ENCODE measurements at regions of chr1 and their contacts with region 1.

Region 1: DNA sequence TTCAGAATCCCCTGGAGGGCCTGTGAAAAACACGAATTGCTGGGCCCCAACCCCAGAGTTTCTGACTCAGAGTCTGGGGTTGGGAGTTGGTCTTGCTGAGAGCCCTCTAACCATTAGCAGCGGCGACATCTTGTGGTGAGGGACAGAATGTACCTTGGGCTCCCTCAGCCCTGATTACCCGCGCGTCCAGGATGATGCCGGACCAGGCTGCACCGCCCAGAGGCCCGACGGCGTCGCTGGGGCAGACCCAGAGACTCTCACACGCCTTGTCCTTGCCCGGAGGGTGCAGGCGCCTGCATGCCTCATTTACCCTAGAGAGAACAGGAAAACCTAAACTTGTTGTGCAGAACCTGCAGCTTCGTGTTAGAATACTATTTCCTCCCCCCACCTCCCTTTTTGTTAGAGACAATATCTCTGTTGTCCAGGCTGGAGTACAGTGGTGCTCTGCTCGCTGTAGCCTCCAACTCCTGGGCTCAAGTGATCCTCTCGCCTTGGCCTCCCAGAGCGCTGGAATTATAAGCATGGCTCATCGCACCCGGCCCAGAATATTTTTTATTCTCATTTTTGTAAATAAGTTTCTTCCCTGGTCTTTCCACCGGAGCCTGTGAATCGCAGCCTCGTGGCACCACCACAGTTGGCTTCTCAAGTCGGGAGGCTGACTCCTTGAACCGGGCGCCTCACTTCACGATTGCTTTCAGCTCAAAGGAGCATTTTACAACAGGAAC is 22.2 kb upstream of the RD3 start:
- DNase-seq: peak; percentile 28
- H3K4me3 ChIP-seq: no peak overlapping the region
- CTCF ChIP-seq: peak; percentile 90

Region 2: DNA sequence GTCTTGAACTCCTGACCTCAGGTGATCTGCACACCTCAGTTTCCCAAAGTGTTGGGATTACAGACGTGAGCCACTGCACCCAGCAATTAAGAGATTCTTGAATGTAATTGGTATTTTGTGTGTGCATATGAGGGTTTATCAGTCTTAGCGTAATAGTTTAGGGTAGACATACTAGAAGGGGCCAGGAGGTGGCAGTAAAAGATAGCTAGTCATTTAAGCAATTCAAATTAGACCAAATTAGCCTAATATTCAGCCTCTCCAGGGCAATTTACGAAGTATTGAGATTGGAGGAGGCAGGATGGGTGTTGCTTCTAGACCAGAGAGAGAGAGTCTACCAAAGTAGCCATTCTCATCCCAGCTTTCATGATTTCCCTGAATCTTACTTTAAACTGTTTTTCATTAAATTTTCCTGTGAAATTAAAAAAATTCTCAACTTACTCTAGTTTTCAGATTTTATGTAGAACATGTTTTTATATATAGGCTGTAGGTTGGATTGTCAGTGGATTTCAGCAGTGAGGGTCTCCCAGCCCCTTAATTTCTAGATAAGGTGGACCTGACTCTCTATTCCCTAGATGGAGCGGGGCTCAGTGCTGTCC is 1065.8 kb before region 1 on chr1:
- CTCF ChIA-PET with region 1: interaction called, 16 read pairs
- POLR2A ChIA-PET with region 1: no interaction called
- DNase-seq: peak; percentile 33
- H3K4me3 ChIP-seq: no peak overlapping the region
- CTCF ChIP-seq: peak; percentile 54

Region 3: DNA sequence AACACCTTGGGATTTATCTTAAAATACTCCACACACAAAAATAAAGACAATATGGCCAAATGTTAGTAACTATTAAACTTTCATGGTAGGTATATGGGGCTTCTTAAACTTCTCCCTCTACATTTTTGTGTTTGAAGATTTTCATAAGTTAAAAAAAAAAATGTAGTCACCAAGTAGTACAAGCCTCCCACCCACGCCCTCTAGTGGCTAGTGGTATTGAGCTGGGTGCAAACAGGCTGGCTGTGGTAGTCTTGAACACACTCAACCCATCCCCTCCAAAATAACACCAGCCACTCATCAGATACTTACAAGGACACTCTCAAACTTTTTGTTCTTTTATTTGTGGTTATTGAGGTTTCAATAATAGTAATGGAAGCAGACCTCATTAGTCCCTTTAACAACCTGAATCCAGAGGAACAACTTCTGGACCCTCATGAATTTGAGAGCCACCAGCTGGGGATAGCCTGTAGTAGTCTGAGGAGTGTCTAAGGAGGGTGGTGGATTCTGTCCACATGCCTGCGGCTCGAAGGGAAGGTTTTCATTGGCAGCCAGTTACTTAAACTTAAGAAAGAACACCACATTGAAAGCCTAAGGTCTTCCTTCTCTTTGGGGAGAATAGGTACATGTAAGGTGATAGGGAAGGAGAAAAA is 37.9 kb before region 1 on chr1:
- CTCF ChIA-PET with region 1: interaction called, 60 read pairs
- POLR2A ChIA-PET with region 1: no interaction called
- DNase-seq: peak; percentile 17
- H3K4me3 ChIP-seq: no peak overlapping the region
- CTCF ChIP-seq: peak; percentile 82

Region 4: DNA sequence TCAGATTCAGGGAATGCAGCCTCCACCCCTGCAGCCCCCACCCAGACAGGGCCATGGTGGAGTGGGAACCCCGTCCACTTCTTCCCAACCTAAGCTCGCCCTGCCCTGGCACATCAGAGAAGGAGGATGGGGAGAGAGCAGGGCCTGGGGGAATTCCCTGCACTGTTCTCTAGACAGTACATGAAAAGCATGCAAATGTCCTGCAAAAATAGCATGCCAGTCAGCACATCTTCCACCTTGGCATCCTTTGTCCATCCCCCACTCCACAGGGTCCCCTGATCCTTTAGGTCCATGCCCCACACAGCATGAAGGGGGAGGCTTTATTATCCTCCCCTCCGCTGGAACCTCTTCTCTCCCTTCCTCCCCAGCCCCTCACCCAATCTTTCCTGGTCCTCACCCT is 12.8 kb after region 1 on chr1:
- CTCF ChIA-PET with region 1: interaction called, 45 read pairs
- POLR2A ChIA-PET with region 1: no interaction called
- DNase-seq: no peak
- H3K4me3 ChIP-seq: no peak overlapping the region
- CTCF ChIP-seq: no peak

Region 5: GRCh38 chr1:211643324-211644212 is 129.4 kb after region 1 on chr1:
- CTCF ChIA-PET with region 1: interaction called, 344 read pairs
- POLR2A ChIA-PET with region 1: no interaction called
- DNase-seq: no peak
- H3K4me3 ChIP-seq: no peak overlapping the region
- CTCF ChIP-seq: no peak

Region 6: DNA sequence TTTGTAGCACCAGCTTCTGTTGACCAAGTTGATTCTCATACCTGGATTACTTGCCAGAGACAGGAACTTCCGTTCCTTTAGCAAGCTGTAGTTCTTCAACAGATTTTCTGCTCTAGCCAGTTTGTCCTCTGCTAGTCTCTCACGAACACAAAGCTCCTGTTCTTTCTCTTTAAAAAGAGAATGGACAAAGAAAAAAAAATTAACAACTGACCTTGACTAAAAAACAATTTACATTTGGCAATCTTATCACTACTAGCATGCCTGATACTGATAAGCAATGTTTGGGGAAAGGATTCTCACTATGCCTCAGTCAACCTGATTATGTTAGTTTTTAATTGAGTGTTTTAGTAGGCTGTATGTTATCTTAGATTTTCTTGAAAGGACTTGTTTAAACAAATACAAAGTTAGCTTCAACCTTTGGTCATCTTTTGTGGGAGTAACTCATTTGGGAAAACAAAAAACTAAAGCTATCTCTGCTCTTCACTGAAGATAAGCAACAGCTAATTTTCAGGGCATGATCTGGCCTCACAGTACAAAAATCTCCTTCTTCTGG is 152.9 kb after region 1 on chr1:
- CTCF ChIA-PET with region 1: interaction called, 15 read pairs
- POLR2A ChIA-PET with region 1: no interaction called
- DNase-seq: no peak
- H3K4me3 ChIP-seq: no peak overlapping the region
- CTCF ChIP-seq: no peak

Measured in AG04449 (cell line).